AG04450 (cell line): ENCODE measurements at regions of chr3 and their contacts with region 1.

Region 1: GRCh38 chr3:124559881-124560574 is 170.2 kb upstream of the UMPS start:
- DNase-seq: peak; percentile 62
- H3K4me3 ChIP-seq: no peak overlapping the region
- H3K27ac ChIP-seq: no peak overlapping the region
- H3K27me3 ChIP-seq: peaks cover 13% of the 10 kb centered on the region
- CTCF ChIP-seq: peak; percentile 93

Region 2: GRCh38 chr3:124351430-124352148 is 208.4 kb before region 1 on chr3:
- CTCF ChIA-PET with region 1: interaction called, 40 read pairs
- POLR2A ChIA-PET with region 1: no interaction called
- DNase-seq: peak; percentile 41
- H3K4me3 ChIP-seq: no peak overlapping the region
- H3K27ac ChIP-seq: no peak overlapping the region
- H3K27me3 ChIP-seq: no peaks in the 10 kb centered on the region
- CTCF ChIP-seq: peak; percentile 69

Region 3: GRCh38 chr3:124688581-124689454 is 128.8 kb after region 1 on chr3:
- CTCF ChIA-PET with region 1: interaction called, 268 read pairs
- POLR2A ChIA-PET with region 1: no interaction called
- DNase-seq: peak; percentile 51
- H3K4me3 ChIP-seq: no peak overlapping the region
- H3K27ac ChIP-seq: no peak overlapping the region
- H3K27me3 ChIP-seq: peaks cover 7% of the 10 kb centered on the region
- CTCF ChIP-seq: peak; percentile 90

Region 4: GRCh38 chr3:124730129-124730940 is 170.3 kb after region 1 on chr3 and contains the start of gene UMPS:
- CTCF ChIA-PET with region 1: interaction called, 11 read pairs
- POLR2A ChIA-PET with region 1: no interaction called
- DNase-seq: peak; percentile 10
- H3K4me3 ChIP-seq: peak within 1 kb of the TSS; percentile 99
- H3K27ac ChIP-seq: no peak within 1 kb of the TSS
- H3K27me3 ChIP-seq: no peaks in the 10 kb centered on the region
- CTCF ChIP-seq: no peak
- polyA plus RNA-seq, gene UMPS: 25.3 and 27.9 TPM in 2 replicates